Adrenal gland (tissue), 19 donors: ENCODE measurements at regions of chr14 and their contacts with region 1.

Region 1: DNA sequence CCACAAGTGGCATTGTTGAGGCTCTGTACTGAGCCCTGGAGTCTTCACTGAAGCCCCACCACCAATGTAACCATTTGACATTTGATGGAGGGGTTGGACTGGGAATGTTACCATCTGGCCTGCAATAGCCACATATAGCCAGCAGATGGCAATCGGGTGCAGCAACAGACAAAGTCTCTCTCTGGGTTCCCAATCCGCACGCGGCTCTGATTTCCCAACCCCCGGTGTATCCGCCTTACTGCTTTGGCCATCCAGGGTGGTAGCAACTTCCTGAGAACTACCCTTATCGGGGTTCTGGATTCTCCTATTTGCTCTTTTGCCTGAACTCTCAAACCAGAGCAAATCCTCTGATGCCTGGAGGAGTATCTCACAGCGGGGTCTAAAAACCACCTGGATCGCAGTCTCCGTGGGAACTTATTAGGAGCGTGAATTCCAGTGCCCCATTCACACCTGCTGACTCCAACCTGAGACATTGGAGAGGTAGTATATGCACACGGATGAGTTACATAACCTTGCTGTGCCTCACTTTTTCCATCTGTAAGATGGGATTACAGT is 14.2 kb downstream of the VRTN start:
- DNase-seq: peak; percentile 77 to 93 (median 88)
- H3K4me3 ChIP-seq: no peak overlapping the region
- H3K27ac ChIP-seq: no peak overlapping the region
- H3K4me1 ChIP-seq: no peaks in the 10 kb centered on the region
- H3K27me3 ChIP-seq: no peaks in the 10 kb centered on the region
- CTCF ChIP-seq: peak; percentile 92 to 97 (median 94)
- POLR2A ChIP-seq: no peak

Region 2: DNA sequence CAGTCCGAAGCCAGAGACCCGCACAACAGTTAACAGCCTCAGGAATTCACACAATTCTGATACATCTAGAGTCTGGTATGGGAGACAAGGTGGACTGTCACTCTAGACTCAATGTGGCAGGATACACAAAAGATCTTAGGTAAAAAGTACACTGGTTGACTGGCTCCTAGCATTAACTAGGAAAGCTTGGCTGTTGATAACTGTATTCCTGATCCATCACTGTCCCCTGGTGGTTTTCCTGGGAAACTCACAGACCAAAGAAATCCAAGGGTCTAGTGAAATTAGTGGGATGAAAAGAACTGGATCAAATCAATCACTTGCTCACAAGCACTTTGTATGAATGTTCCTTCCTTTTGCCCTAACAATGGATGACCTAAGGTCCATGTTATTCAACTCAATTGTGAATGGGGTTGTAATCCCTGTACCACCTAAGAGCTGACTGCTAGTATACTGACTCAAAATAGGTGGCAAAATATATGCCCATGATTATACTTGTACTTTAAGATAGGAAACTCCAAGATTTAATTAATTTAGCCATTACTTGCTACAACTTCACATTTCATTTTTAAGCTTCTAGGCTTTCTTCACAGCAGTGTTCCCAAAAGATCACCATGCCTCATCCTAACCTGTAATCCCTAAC is 116.7 kb after region 1 on chr14:
- intact Hi-C with region 1: loop called (anchors 5 to 10 kb)
- DNase-seq: no peak
- H3K4me3 ChIP-seq: no peak overlapping the region
- H3K27ac ChIP-seq: no peak overlapping the region
- H3K4me1 ChIP-seq: peaks cover 10 to 31% of the 10 kb centered on the region in 2 donors
- H3K27me3 ChIP-seq: no peaks in the 10 kb centered on the region
- CTCF ChIP-seq: peak; percentile 25 to 63 (median 54)
- POLR2A ChIP-seq: no peak

Region 3: DNA sequence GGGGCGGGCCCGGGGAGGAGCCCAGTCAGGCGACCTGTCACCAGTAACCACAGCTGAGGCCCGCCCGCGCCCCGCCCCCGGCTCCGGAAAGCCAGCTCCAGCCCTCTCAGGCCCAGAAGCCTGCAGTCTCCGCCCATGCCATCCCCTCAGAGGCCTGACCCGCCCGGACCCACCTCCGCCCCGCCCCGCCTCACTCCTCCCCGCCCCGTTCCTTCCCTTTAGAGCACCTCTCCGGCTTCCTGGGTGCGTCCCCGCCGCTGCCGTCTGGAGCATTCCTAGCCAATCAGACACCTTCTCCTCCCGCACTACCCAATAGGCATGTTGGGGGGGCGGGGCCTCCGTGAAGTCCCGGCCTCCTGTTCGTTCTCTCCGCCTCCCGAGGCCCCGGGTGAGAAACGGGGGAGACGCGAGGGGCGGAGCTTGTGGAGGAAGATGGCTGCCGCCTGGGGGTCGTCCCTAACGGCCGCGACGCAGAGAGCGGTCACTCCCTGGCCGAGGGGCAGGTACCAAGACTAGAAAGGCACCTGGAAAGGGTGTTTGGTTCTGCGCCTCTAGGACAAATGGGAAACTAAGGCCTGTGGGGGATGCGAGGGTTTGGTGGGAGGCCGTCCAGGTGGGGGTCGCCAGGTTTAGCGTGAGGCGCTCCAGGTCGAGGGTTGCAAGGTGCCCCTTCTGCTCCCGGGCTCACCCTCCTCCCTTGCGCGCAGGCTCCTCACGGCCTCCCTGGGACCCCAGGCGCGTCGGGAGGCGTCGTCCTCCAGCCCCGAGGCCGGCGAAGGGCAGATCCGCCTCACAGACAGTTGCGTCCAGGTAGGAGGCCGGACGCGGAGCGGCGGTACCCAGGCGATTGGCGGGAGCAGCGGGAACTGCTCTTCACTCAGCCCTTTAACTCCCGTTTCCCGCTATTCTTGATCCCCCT is 131.2 kb after region 1 on chr14 and contains the start of gene ISCA2:
- intact Hi-C with region 1: loop called in 1 of 2 experiments (anchors 5 kb)
- DNase-seq: peak; percentile 100
- H3K4me3 ChIP-seq: peak within 1 kb of the TSS; percentile 57 to 86 (median 86)
- H3K27ac ChIP-seq: peak within 1 kb of the TSS; percentile 84 to 98 (median 97)
- H3K4me1 ChIP-seq: peaks cover 33 to 52% of the 10 kb centered on the region in 2 donors
- H3K27me3 ChIP-seq: no peaks in the 10 kb centered on the region
- CTCF ChIP-seq: peak in 2 of 6 experiments; percentile 1 to 16
- POLR2A ChIP-seq: no peak
- total RNA-seq, gene ISCA2: 13.2 to 63.6 (median 48.3) TPM